Activated T-helper 1 cell treated with anti-CD3 and anti-CD28 coated beads, Interleukin-12 subunit alpha, Interleukin-12 subunit beta, Interleukin-2, Interleukin-4 antibody, amounts not matched to agents 30 ng/mL and 10 ng/mL and 1 ng/mL, durations not matched to agents 14 hours and 24 hours and 36 hours (primary cell): ENCODE measurements at regions of chr4 and their contacts with region 1.

Region 1: DNA sequence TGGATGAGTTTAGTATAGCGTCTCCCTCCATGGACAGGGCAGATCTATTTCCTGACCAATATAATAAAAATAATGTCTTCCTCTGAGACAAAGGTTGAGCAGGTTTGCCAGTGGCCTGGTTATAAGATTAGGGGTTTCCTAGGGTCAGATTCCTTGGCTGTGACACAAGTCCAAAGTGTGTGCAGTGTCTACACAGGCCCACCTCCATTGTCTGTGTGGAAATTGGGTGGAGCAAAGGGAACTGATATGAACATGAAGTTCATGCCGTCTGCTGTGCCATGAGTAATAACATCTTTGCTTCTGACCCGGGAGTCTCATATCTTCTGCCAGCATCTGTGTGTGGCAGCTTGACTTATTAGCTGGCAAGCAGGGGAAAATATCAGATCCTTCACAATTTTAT is 187.7 kb upstream of the BOD1L1 start:
- DNase-seq: no peak
- H3K4me3 Mint-ChIP-seq: no peak overlapping the region
- H3K27ac Mint-ChIP-seq: no peak overlapping the region
- H3K4me1 Mint-ChIP-seq: no peaks in the 10 kb centered on the region
- H3K27me3 Mint-ChIP-seq: peaks cover 2% of the 10 kb centered on the region

Region 2: DNA sequence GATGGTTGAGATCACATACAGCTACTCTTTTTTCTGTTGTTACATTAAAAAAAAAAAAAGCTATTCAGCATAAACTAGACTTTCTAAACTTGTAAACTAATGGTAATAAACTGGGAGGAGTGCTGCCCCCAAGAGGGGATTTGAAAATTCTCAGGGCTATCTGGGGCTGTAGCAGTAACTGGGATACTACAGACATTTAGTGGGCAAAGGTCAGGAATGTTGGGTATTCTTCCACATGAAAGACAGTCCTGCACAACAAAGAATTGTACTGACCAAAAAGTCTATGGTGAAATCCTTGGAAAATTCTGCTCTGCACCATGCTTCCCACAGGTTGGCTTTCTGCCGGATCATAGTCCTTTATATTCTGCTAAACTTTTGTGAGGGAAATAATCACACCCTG is 44.9 kb after region 1 on chr4:
- intact Hi-C with region 1: no loop called
- DNase-seq: no peak
- H3K4me3 Mint-ChIP-seq: no peak overlapping the region
- H3K27ac Mint-ChIP-seq: no peak overlapping the region
- H3K4me1 Mint-ChIP-seq: no peaks in the 10 kb centered on the region
- H3K27me3 Mint-ChIP-seq: no peaks in the 10 kb centered on the region

Region 3: GRCh38 chr4:15188605-15189539 is 1373.6 kb after region 1 on chr4:
- intact Hi-C with region 1: loop called (anchors 5 kb)
- DNase-seq: no peak
- H3K4me3 Mint-ChIP-seq: no peak overlapping the region
- H3K27ac Mint-ChIP-seq: no peak overlapping the region
- H3K4me1 Mint-ChIP-seq: no peaks in the 10 kb centered on the region
- H3K27me3 Mint-ChIP-seq: peaks cover 2% of the 10 kb centered on the region